Activated CD4-positive, alpha-beta memory T cell treated with anti-CD3 and anti-CD28 coated beads, Interleukin-2, amount 10 ng/mL, durations not matched to agents 7 days and 5 days (primary cell): ENCODE measurements at regions of chr17 and their contacts with region 1.

Region 1: GRCh38 chr17:37816950-37817349 is 72.1 kb upstream of the HNF1B start:
- DNase-seq: no peak
- H3K4me3 Mint-ChIP-seq: no peak overlapping the region
- H3K27ac Mint-ChIP-seq: no peak overlapping the region
- H3K4me1 Mint-ChIP-seq: peaks cover 23% of the 10 kb centered on the region
- H3K27me3 Mint-ChIP-seq: peaks cover 36% of the 10 kb centered on the region

Region 2: GRCh38 chr17:37527249-37527851 is 289.6 kb before region 1 on chr17:
- CTCF ChIA-PET with region 1: interaction called, 13 read pairs
- POLR2A ChIA-PET with region 1: no interaction called
- DNase-seq: no peak
- H3K4me3 Mint-ChIP-seq: no peak overlapping the region
- H3K27ac Mint-ChIP-seq: no peak overlapping the region
- H3K4me1 Mint-ChIP-seq: peaks cover 5% of the 10 kb centered on the region
- H3K27me3 Mint-ChIP-seq: no peaks in the 10 kb centered on the region

Region 3: GRCh38 chr17:37671824-37672547 is 145.0 kb before region 1 on chr17:
- CTCF ChIA-PET with region 1: no interaction called
- POLR2A ChIA-PET with region 1: no interaction called
- DNase-seq: no peak
- H3K4me3 Mint-ChIP-seq: no peak overlapping the region
- H3K27ac Mint-ChIP-seq: no peak overlapping the region
- H3K4me1 Mint-ChIP-seq: no peaks in the 10 kb centered on the region
- H3K27me3 Mint-ChIP-seq: peaks cover 15% of the 10 kb centered on the region

Region 4: DNA sequence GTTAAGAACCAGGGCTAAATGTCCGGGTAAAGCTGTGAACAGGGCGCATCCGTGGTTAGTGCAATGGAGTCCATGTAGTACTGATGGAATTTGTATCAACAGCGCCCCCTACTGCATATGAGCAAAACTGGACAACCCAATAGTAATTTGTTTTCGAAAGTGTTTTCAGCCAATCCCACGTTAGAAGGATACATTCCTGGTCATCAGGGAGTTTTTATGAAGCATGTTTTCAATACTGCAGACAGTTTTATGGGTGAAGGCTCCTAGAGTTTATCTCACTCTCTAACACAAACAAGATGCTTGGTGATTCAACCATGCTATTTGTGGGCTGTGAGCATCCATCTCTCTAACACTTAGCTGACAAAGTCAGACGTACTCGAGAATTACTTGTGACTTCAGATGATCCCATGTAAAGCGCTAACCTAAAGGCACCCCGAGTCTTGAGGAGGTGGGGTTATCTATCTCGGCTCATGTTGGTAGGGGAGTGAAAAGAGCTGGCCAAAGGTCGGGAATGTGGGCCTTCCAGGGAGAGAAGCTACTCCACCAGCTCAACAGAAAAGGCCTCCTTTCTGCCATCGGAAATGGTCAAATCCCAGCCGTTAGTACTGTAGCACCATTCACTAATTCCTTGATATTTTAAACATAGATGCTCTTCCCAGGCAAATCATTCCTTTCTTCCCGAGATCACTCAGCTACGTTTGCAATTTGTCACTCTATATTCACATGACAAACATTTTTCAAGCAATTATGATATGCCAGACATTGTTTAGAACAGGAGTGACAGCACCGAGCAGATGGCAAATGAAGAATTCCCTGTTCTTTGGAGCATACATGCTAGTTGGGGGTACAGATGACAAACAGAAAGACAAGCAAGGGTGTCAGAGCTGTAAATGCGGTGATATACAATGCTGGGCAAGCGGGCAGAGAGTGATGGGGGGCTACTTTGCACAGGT is 25.2 kb before region 1 on chr17:
- CTCF ChIA-PET with region 1: interaction called, 21 read pairs
- POLR2A ChIA-PET with region 1: no interaction called
- DNase-seq: peak; percentile 70
- H3K4me3 Mint-ChIP-seq: no peak overlapping the region
- H3K27ac Mint-ChIP-seq: no peak overlapping the region
- H3K4me1 Mint-ChIP-seq: peaks cover 6% of the 10 kb centered on the region
- H3K27me3 Mint-ChIP-seq: peaks cover 42% of the 10 kb centered on the region